ENCODE measurements at regions of chr12 and their contacts with region 1.

Region 1: GRCh38 chr12:57111031-57111734 is at the start of gene STAT6:
- DNase-seq: peak; percentile 86
- H3K4me3 Mint-ChIP-seq: peak within 1 kb of the TSS; percentile 80
- H3K27ac Mint-ChIP-seq: peak within 1 kb of the TSS; percentile 89
- H3K4me1 Mint-ChIP-seq: peaks cover 35% of the 10 kb centered on the region
- H3K27me3 Mint-ChIP-seq: no peaks in the 10 kb centered on the region
- CTCF ChIP-seq: no peak
- total RNA-seq, gene STAT6: 99.7 and 122 TPM in 2 replicates

Region 2: GRCh38 chr12:56457817-56458216 is 653.4 kb before region 1 on chr12:
- CTCF ChIA-PET with region 1: no interaction called
- POLR2A ChIA-PET with region 1: no interaction called
- intact Hi-C with region 1: no loop called
- DNase-seq: no peak
- H3K4me3 Mint-ChIP-seq: no peak overlapping the region
- H3K27ac Mint-ChIP-seq: no peak overlapping the region
- H3K4me1 Mint-ChIP-seq: no peaks in the 10 kb centered on the region
- H3K27me3 Mint-ChIP-seq: no peaks in the 10 kb centered on the region
- CTCF ChIP-seq: no peak

Region 3: GRCh38 chr12:56724972-56725722 is 386.0 kb before region 1 on chr12 and contains the start of gene NACA:
- CTCF ChIA-PET with region 1: no interaction called
- POLR2A ChIA-PET with region 1: interaction called, 15 read pairs
- intact Hi-C with region 1: no loop called
- DNase-seq: peak; percentile 97
- H3K4me3 Mint-ChIP-seq: peak within 1 kb of the TSS; percentile 91
- H3K27ac Mint-ChIP-seq: peak within 1 kb of the TSS; percentile 97
- H3K4me1 Mint-ChIP-seq: peaks cover 28% of the 10 kb centered on the region
- H3K27me3 Mint-ChIP-seq: no peaks in the 10 kb centered on the region
- CTCF ChIP-seq: no peak
- total RNA-seq, gene NACA: 1,274 and 1,490 TPM in 2 replicates

Region 4: GRCh38 chr12:57031138-57031725 is 80.0 kb before region 1 on chr12:
- CTCF ChIA-PET with region 1: interaction called, 4 read pairs
- POLR2A ChIA-PET with region 1: interaction called, 11 read pairs
- intact Hi-C with region 1: no loop called
- DNase-seq: peak; percentile 81
- H3K4me3 Mint-ChIP-seq: peak overlapping the region; percentile 41
- H3K27ac Mint-ChIP-seq: peak overlapping the region; percentile 76
- H3K4me1 Mint-ChIP-seq: peaks cover 30% of the 10 kb centered on the region
- H3K27me3 Mint-ChIP-seq: peaks cover 21% of the 10 kb centered on the region
- CTCF ChIP-seq: no peak

Region 5: GRCh38 chr12:57069523-57069922 is 41.7 kb before region 1 on chr12:
- CTCF ChIA-PET with region 1: interaction called, 112 read pairs
- POLR2A ChIA-PET with region 1: interaction called, 146 read pairs
- intact Hi-C with region 1: loop called (anchors 1 kb)
- DNase-seq: peak; percentile 86
- H3K4me3 Mint-ChIP-seq: no peak overlapping the region
- H3K27ac Mint-ChIP-seq: peak overlapping the region; percentile 83
- H3K4me1 Mint-ChIP-seq: peaks cover 12% of the 10 kb centered on the region
- H3K27me3 Mint-ChIP-seq: no peaks in the 10 kb centered on the region
- CTCF ChIP-seq: peak; percentile 78

Region 6: DNA sequence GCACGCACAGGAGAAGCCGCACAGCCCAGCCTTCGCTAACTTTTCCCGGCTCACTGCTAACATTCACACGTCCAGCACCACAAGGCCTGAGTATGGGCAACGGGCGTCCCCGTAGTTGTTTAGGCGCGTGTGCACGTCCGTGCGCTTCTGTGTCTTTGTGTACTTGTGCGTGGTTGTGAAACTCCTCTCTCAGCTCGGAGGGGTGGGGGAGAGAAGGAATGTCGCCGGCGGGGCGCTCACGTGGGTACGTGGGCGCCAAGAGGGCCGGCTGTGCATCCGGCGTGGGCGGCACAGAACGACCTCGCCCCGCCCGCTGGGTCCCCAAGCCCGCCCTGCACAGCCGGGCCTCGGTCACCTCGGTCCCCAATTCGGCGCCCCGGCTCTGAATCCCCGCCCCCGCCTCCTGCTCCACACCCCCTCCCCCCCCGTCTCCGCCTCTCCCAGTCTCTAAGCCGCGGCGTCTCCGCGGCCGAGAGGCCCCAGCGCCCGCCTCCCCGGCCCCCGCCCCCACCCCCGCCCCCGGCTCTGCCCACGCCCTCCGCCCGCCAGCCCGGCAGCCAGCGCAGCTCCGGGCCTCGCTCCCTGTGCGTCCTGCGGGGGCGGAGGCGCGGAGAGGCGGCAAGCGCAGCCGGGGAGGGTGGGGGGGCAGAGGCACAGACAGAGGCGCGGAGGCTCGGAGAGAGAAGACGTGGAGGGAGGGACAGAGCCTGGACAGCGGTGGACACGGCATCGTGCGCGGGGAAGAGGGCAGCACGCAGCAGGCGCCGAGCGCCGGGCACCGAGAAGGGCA is 22.5 kb before region 1 on chr12 and contains the start of gene NAB2:
- CTCF ChIA-PET with region 1: interaction called, 147 read pairs
- POLR2A ChIA-PET with region 1: interaction called, 610 read pairs
- intact Hi-C with region 1: loop called (anchors 1 kb)
- DNase-seq: peak; percentile 96
- H3K4me3 Mint-ChIP-seq: peak within 1 kb of the TSS; percentile 90
- H3K27ac Mint-ChIP-seq: peak within 1 kb of the TSS; percentile 94
- H3K4me1 Mint-ChIP-seq: peaks cover 36% of the 10 kb centered on the region
- H3K27me3 Mint-ChIP-seq: no peaks in the 10 kb centered on the region
- CTCF ChIP-seq: no peak
- total RNA-seq, gene NAB2: 25.8 and 30.6 TPM in 2 replicates

Region 7: GRCh38 chr12:57151741-57152630 is 40.8 kb after region 1 on chr12:
- CTCF ChIA-PET with region 1: interaction called, 6 read pairs
- POLR2A ChIA-PET with region 1: interaction called, 34 read pairs
- intact Hi-C with region 1: no loop called
- DNase-seq: peak; percentile 89
- H3K4me3 Mint-ChIP-seq: peak overlapping the region; percentile 29
- H3K27ac Mint-ChIP-seq: peak overlapping the region; percentile 70
- H3K4me1 Mint-ChIP-seq: peaks cover 57% of the 10 kb centered on the region
- H3K27me3 Mint-ChIP-seq: no peaks in the 10 kb centered on the region
- CTCF ChIP-seq: no peak

Region 8: GRCh38 chr12:57182921-57183790 is 72.0 kb after region 1 on chr12:
- CTCF ChIA-PET with region 1: interaction called, 530 read pairs
- POLR2A ChIA-PET with region 1: interaction called, 15 read pairs
- intact Hi-C with region 1: no loop called
- DNase-seq: peak; percentile 82
- H3K4me3 Mint-ChIP-seq: no peak overlapping the region
- H3K27ac Mint-ChIP-seq: peak overlapping the region; percentile 33
- H3K4me1 Mint-ChIP-seq: peaks cover 10% of the 10 kb centered on the region
- H3K27me3 Mint-ChIP-seq: no peaks in the 10 kb centered on the region
- CTCF ChIP-seq: peak; percentile 89

Region 9: DNA sequence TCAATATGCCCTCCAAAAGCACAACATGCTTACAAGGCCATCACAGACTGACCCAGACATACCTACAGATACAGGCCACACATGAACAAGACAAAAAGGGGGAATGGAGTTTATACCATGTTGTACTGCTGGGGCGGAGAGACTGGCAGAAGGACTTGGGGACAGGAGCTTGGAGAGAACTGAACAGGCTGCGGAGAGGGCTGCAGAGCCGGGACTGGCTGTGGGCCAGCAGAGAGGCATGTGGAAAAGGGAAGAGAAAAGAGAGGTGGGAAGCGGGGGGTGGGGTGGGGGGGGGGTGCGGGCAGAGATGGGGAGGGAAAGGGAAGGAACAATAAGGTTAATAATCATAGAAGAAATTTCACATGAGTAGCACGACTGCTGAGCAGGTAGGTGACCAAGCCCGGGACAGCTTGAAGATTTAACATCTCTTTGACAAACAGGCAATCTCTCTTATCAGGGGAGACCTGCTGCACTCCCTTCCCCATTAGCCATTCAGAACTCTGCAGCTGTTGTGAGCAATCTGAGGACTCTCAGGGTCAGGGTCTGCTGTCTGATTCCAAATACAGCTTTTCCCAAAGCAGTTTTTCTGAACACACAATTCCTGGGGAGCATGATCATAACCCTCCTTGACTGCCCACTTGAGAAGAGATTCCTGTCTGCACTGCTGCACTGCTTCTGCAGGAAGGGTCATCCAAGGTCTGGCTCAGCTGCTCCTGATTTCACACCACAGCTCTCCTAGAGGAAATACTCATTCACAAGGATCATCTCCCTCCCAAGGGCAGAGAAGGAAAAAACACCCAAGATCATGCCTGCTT is 161.4 kb after region 1 on chr12:
- CTCF ChIA-PET with region 1: no interaction called
- POLR2A ChIA-PET with region 1: no interaction called
- intact Hi-C with region 1: no loop called
- DNase-seq: no peak
- H3K4me3 Mint-ChIP-seq: no peak overlapping the region
- H3K27ac Mint-ChIP-seq: no peak overlapping the region
- H3K4me1 Mint-ChIP-seq: no peaks in the 10 kb centered on the region
- H3K27me3 Mint-ChIP-seq: no peaks in the 10 kb centered on the region
- CTCF ChIP-seq: no peak

Region 10: DNA sequence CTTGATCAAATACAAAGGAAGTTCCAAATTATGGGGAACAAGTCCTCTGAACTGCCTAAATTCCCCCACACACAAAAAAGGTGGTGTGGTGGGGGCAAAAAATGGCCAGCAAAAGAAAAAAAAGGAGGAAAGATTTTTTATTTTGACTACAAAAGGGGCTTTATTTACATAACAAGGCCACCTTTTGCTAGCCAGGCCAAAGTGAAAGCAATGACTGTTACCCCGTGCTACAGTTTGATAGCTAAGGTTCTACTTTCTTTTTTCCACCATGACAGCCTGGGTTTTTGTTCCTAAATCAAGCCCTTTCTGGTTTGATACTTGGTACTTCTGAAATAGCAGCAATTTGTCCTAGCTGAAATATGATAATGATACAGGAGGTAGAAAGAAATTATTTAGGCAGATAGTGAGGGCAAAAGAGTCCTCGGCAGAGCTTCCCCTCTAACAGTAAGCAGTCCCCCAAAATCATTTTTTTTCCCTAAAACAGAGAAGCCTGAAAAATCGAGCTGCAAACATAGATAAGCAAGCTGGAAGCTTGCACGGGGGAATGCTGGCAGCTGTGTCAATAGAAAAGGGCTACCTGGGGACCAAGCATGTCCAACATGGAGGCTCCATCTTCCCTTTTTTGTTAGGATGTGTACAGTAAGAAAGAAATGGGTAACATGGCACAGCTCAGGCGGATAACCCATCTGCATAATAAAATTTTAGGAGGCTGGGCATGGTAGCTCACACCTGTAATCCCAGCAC is 530.7 kb after region 1 on chr12:
- CTCF ChIA-PET with region 1: no interaction called
- POLR2A ChIA-PET with region 1: no interaction called
- intact Hi-C with region 1: no loop called
- DNase-seq: no peak
- H3K4me3 Mint-ChIP-seq: no peak overlapping the region
- H3K27ac Mint-ChIP-seq: no peak overlapping the region
- H3K4me1 Mint-ChIP-seq: no peaks in the 10 kb centered on the region
- H3K27me3 Mint-ChIP-seq: peaks cover 31% of the 10 kb centered on the region
- CTCF ChIP-seq: no peak